Sciatic nerve (tissue), 2 donors: ENCODE measurements at regions of chr12 and their contacts with region 1.

Region 1: GRCh38 chr12:44484855-44485254 is 391.3 kb downstream of the NELL2 start:
- DNase-seq: no peak
- ATAC-seq: no peak

Region 2: DNA sequence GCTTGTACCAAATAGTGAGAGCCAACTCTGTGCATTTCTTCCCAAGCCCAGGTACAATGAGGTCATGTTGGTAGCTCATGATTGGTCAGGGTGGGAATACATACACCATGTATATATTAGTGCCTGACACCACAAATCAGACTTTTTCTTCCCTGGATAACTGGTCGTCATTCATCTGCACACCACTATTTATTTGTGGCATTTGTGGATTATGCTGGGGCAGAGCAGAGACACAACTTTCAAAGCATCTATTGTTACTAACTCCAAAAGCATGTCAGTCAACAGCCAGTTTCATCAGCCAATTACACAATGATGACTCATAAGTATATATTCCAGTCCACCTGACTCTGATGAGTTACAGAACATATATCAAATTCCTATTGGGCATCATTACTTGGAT is 1114.6 kb before region 1 on chr12:
- intact Hi-C with region 1: no loop called
- DNase-seq: no peak
- ATAC-seq: no peak

Region 3: DNA sequence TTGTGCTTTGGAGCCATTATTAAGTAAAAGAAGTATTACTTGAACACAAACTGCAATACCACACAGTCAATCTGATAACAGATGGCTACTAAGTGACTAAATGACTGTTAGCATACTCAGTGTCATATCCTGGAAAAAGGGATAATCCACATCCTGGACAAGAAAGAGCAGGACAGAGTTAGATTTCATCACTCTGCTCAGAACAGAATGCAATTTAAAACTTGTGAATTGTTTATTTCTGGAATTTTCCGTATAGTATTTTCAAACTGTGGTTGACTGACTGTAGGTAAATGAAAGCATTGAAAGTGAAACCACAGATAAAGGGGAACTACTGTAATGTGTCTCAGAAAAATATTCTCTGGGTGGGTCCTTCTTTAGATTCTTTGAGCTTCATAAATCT is 190.2 kb before region 1 on chr12:
- intact Hi-C with region 1: no loop called
- DNase-seq: no peak
- ATAC-seq: no peak

Region 4: DNA sequence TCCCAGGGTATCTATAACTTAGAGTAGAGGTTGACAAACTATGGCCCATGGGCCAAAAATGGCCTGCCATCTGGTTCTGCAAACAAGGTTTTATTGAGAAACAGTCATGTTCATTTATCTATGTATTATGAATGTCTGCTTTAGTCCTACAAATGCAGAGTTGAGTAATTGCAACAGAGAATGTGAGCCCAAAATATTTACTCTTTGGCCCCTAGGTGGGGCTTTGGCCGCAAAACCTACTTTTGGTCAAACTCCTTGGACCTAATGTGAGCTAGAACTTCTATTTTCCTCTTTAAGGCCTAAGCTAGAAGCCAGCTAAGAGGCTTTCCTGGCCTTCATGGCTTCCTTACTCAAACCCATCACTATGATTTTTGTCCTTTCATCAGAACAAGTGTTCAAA is 12.2 kb after region 1 on chr12:
- intact Hi-C with region 1: loop called (anchors 1 kb)
- DNase-seq: no peak
- ATAC-seq: no peak

Region 5: DNA sequence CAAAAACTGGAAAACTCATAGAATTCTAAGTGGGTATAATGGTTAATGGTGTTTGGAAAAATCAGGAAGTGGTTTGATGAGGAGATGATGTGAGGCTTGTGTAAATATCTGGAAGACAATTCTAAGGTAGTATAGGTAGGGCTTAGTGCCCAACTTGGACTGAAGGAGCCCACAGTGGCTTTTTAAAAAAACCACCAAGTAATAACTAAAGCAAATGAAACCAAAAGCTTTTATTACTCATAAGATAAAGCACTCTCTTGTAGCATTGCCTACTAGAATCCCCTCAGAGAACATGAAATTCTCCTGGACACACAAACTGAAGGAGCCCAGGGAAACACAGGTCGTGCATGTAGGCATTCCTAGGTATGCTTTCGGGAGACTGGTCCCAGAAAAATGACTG is 66.8 kb after region 1 on chr12:
- intact Hi-C with region 1: no loop called
- DNase-seq: no peak
- ATAC-seq: no peak